Mammary epithelial cell (primary cell): ENCODE measurements at regions of chrX and their contacts with region 1.

Region 1: DNA sequence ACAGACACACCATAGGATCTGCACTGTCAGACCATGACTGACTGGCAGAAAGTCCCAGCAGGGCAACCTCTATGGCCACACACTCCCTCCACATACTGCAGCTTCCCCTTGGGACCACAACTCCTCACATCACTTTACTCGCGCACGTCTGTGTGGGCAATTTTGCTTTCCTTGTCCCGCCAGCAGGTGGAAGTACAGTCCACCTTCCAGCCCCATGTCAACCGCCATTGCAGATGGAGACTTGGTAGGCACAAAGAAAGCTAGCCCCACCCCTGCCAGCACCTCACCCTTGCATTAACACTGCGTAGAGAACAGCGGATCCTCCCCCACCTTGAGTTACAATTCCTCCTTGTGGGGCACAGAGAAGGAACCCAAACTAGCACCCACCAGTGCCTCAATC is 74.4 kb upstream of the NAP1L2 start:
- DNase-seq: no peak
- H3K4me3 ChIP-seq: no peak overlapping the region
- H3K27ac ChIP-seq: no peak overlapping the region
- H3K4me1 ChIP-seq: no peaks in the 10 kb centered on the region
- H3K27me3 ChIP-seq: no peaks in the 10 kb centered on the region
- CTCF ChIP-seq: peak in 1 of 2 donors; percentile 22

Region 2: GRCh38 chrX:73850124-73851013 is 561.3 kb after region 1 on chrX:
- CTCF ChIA-PET with region 1: no interaction called
- dilution Hi-C with region 1: no loop called
- in situ Hi-C with region 1: no loop called
- intact Hi-C with region 1: loop called (anchors 1 kb)
- DNase-seq: peak; percentile 35
- H3K4me3 ChIP-seq: peak overlapping the region; percentile 45 to 58 (median 49)
- H3K27ac ChIP-seq: no peak overlapping the region
- H3K4me1 ChIP-seq: no peaks in the 10 kb centered on the region
- H3K27me3 ChIP-seq: no peaks in the 10 kb centered on the region
- CTCF ChIP-seq: peak in 1 of 2 donors; percentile 51

Region 3: GRCh38 chrX:73863268-73863667 is 574.2 kb after region 1 on chrX:
- CTCF ChIA-PET with region 1: interaction called, 19 read pairs
- dilution Hi-C with region 1: no loop called
- in situ Hi-C with region 1: no loop called
- intact Hi-C with region 1: no loop called
- DNase-seq: no peak
- H3K4me3 ChIP-seq: no peak overlapping the region
- H3K27ac ChIP-seq: no peak overlapping the region
- H3K4me1 ChIP-seq: no peaks in the 10 kb centered on the region
- H3K27me3 ChIP-seq: peaks cover 2% of the 10 kb centered on the region
- CTCF ChIP-seq: no peak